T-cell (primary cell): ENCODE measurements at regions of chr4 and their contacts with region 1.

Region 1: GRCh38 chr4:83535520-83536361 is at the start of gene GPAT3:
- DNase-seq: peak; percentile 23 to 66 (median 41)
- ATAC-seq: peak; percentile 83 to 89 (median 84)
- H3K4me3 ChIP-seq: peak within 1 kb of the TSS; percentile 67 to 74
- H3K4me3 Mint-ChIP-seq: peak within 1 kb of the TSS; percentile 85 to 94 (median 94)
- H3K27ac ChIP-seq: peak within 1 kb of the TSS; percentile 47
- H3K27ac Mint-ChIP-seq: peak within 1 kb of the TSS; percentile 86 to 87
- H3K4me1 ChIP-seq: peaks cover 6 to 20% of the 10 kb centered on the region in 2 experiments
- H3K4me1 Mint-ChIP-seq: peaks cover 15 to 29% (median 29%) of the 10 kb centered on the region in 3 donors
- H3K27me3 ChIP-seq: peaks cover 0 to 20% of the 10 kb centered on the region in 2 experiments
- H3K27me3 Mint-ChIP-seq: peaks cover 8 to 16% of the 10 kb centered on the region in 2 donors
- total RNA-seq, gene GPAT3: 2.7 to 8.3 (median 6.1) TPM

Region 2: GRCh38 chr4:82192017-82192673 is 1343.6 kb before region 1 on chr4:
- CTCF ChIA-PET with region 1: no interaction called
- POLR2A ChIA-PET with region 1: no interaction called
- DNase-seq: no peak
- ATAC-seq: no peak
- H3K4me3 ChIP-seq: no peak overlapping the region
- H3K4me3 Mint-ChIP-seq: no peak overlapping the region
- H3K27ac ChIP-seq: no peak overlapping the region
- H3K27ac Mint-ChIP-seq: no peak overlapping the region
- H3K4me1 ChIP-seq: no peaks in the 10 kb centered on the region
- H3K4me1 Mint-ChIP-seq: no peaks in the 10 kb centered on the region
- H3K27me3 ChIP-seq: no peaks in the 10 kb centered on the region
- H3K27me3 Mint-ChIP-seq: no peaks in the 10 kb centered on the region

Region 3: GRCh38 chr4:83503974-83504373 is 31.8 kb before region 1 on chr4:
- CTCF ChIA-PET with region 1: no interaction called
- POLR2A ChIA-PET with region 1: interaction called in 1 of 2 experiments, 16 read pairs
- DNase-seq: peak in 32 of 35 experiments; percentile 11 to 63 (median 36)
- ATAC-seq: peak; percentile 81 to 95 (median 85)
- H3K4me3 ChIP-seq: no peak overlapping the region
- H3K4me3 Mint-ChIP-seq: peak overlapping the region in 1 of 3 donors; percentile 38
- H3K27ac ChIP-seq: peak overlapping the region; percentile 47
- H3K27ac Mint-ChIP-seq: peak overlapping the region; percentile 91
- H3K4me1 ChIP-seq: peaks cover 3 to 14% of the 10 kb centered on the region in 2 experiments
- H3K4me1 Mint-ChIP-seq: peaks cover 9 to 19% (median 17%) of the 10 kb centered on the region in 3 donors
- H3K27me3 ChIP-seq: no peaks in the 10 kb centered on the region
- H3K27me3 Mint-ChIP-seq: no peaks in the 10 kb centered on the region

Region 4: GRCh38 chr4:83548151-83548905 is 12.6 kb after region 1 on chr4:
- CTCF ChIA-PET with region 1: interaction called, 3 to 10 read pairs
- POLR2A ChIA-PET with region 1: interaction called in 1 of 2 experiments, 3 read pairs
- DNase-seq: peak in 28 of 35 experiments; percentile 3 to 47 (median 20)
- ATAC-seq: peak; percentile 39 to 98 (median 78)
- H3K4me3 ChIP-seq: no peak overlapping the region
- H3K4me3 Mint-ChIP-seq: no peak overlapping the region
- H3K27ac ChIP-seq: no peak overlapping the region
- H3K27ac Mint-ChIP-seq: peak overlapping the region in 1 of 2 donors; percentile 48
- H3K4me1 ChIP-seq: no peaks in the 10 kb centered on the region
- H3K4me1 Mint-ChIP-seq: peaks cover 0 to 9% (median 5%) of the 10 kb centered on the region in 3 donors
- H3K27me3 ChIP-seq: no peaks in the 10 kb centered on the region
- H3K27me3 Mint-ChIP-seq: peaks cover 0 to 3% of the 10 kb centered on the region in 2 donors